Sigmoid colon (tissue), 7 donors: ENCODE measurements at regions of chr22 and their contacts with region 1.

Region 1: GRCh38 chr22:17171313-17172171 is 12.5 kb upstream of the HDHD5 start:
- DNase-seq: peak; percentile 93
- H3K4me3 ChIP-seq: peak overlapping the region; percentile 31 to 83 (median 63)
- H3K27ac ChIP-seq: peak overlapping the region; percentile 86 to 92 (median 89)
- H3K4me1 ChIP-seq: peaks cover 0 to 18% (median 8%) of the 10 kb centered on the region in 4 donors
- H3K27me3 ChIP-seq: no peaks in the 10 kb centered on the region
- CTCF ChIP-seq: peak; percentile 63 to 88 (median 80)
- EP300 ChIP-seq: no peak
- POLR2A ChIP-seq: no peak

Region 2: DNA sequence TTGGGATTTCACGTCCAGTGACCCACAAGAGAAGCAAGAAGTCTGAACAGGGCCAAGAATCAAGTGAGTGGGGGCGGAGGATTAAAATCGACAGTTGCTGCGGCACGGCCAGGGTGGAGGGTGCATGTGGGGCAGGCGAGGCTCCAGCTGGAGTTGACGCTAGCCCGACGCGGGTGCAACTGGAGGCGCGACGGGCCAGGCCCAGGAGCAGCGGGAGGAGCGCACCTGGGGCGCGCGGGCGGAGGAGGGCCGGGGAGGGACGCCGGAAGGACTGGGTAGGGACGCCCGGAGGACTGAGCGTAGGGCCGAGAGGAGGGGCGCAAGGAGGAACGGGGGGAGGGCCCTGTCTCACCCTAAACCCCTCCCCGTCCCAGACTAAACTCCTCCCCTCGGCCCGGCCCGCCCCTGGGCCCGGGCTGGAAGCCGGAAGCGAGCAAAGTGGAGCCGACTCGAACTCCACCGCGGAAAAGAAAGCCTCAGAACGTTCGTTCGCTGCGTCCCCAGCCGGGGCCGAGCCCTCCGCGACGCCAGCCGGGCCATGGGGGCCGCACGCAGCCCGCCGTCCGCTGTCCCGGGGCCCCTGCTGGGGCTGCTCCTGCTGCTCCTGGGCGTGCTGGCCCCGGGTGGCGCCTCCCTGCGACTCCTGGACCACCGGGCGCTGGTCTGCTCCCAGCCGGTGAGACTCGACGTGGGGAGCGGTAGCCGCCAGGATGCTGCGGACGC is 86.8 kb before region 1 on chr22 and contains the start of gene IL17RA:
- intact Hi-C with region 1: loop called (anchors 5 kb)
- DNase-seq: peak; percentile 94
- H3K4me3 ChIP-seq: peak within 1 kb of the TSS; percentile 45 to 87 (median 68)
- H3K27ac ChIP-seq: peak within 1 kb of the TSS; percentile 80 to 92 (median 84)
- H3K4me1 ChIP-seq: peaks cover 0 to 28% (median 14%) of the 10 kb centered on the region in 4 donors
- H3K27me3 ChIP-seq: peaks cover 0 to 27% (median 0%) of the 10 kb centered on the region in 3 donors
- CTCF ChIP-seq: no peak
- EP300 ChIP-seq: no peak
- POLR2A ChIP-seq: peak; percentile 26 to 52
- total RNA-seq, gene IL17RA: 7.5 to 8.6 (median 8.4) TPM

Region 3: DNA sequence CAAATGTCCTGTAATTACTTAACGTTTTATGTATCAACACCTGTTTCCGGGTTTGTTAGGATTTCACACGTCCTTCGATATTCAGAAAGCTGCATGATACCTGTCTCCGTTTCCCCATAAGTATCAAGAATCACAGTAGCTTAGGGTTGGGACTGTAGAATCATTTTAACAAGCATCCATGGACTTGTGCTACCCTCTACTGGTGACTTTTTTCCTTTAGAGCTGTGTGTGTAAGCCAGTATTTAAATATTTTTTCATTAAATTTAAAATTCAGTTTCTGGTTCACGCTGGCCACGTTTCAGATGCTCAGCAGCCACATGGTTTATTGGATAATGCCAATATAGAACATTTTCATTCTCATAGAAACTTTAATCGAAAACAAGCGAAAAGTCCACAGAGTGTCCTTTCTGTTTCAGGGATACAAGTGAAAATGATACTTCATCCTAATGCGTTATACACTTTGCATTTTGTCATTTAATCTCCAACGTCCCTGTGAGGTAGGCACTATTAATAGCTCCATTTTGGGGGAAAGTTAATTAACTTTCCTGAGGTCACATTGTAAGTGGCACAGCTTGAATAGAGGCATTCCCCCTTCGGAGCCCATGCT is 330.2 kb after region 1 on chr22:
- intact Hi-C with region 1: loop called (anchors 1 kb)
- DNase-seq: no peak
- H3K4me3 ChIP-seq: no peak overlapping the region
- H3K27ac ChIP-seq: no peak overlapping the region
- H3K4me1 ChIP-seq: no peaks in the 10 kb centered on the region
- H3K27me3 ChIP-seq: no peaks in the 10 kb centered on the region
- CTCF ChIP-seq: peak; percentile 27 to 53 (median 48)
- EP300 ChIP-seq: no peak
- POLR2A ChIP-seq: no peak